ENCODE measurements at regions of chr1 and their contacts with region 1.

Region 1: DNA sequence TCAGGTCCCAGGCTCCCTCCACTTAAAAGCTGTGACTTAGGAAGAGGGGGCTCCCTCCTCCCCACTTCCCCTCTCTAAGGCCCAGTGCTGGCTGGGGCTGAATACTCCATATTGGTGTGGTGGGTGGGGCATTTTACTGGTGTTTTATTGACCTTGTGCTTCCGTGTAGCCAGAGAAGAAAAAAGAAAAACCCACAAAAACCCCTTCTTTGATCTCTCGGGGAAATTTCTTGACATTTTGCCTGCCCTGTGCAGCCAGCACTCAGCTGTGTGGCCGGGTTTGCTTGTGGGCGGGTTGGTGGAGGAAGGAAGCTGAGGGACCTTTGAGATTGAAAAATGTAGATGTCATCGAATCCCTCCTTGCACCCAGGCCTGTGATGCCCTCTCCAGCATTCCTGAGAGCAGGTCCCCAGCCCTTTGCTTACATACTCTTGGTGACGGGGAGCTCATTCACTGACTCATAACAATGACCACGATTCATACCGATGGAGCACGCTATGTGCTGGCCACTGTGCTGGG is 24.8 kb downstream of the TNFRSF8 start:
- DNase-seq: peak; percentile 66
- H3K4me3 Mint-ChIP-seq: peak overlapping the region; percentile 51
- H3K27ac Mint-ChIP-seq: peak overlapping the region; percentile 95
- H3K4me1 Mint-ChIP-seq: peaks cover 58% of the 10 kb centered on the region
- H3K27me3 Mint-ChIP-seq: no peaks in the 10 kb centered on the region

Region 2: DNA sequence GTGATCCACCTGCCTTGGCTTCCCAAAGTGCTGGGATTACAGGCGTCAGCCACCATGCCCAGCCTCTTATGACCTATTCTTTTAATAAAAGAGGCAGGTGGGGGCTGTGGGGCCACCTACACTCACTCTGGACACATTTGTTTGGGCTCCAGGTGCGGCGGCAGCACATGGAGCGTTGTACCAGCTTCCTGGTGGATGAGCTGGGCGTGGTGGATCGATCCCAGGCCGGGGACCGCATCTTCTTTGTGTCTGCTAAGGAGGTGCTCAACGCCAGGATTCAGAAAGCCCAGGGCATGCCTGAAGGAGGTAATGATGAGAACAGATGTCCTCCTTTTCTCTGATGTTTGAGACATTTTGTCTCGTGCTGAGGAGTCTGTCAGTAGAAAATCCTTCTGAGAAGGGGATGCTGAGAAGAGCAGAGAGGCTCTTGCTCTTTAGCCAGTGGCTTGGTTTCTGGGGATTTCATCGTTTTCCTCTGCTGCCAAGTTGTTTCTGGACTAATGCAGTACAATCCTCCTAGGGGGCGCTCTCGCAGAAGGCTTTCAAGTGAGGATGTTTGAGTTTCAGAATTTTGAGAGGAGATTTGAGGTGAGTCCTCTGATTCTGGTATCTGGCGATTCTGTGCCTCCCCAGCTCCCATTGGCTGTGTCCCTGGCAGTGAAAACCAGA is 86.5 kb before region 1 on chr1:
- intact Hi-C with region 1: loop called (anchors 5 kb)
- DNase-seq: peak; percentile 34
- H3K4me3 Mint-ChIP-seq: no peak overlapping the region
- H3K27ac Mint-ChIP-seq: peak overlapping the region; percentile 18
- H3K4me1 Mint-ChIP-seq: peaks cover 23% of the 10 kb centered on the region
- H3K27me3 Mint-ChIP-seq: no peaks in the 10 kb centered on the region

Measured in activated T-helper 1 cell treated with anti-CD3 and anti-CD28 coated beads, Interleukin-12 subunit alpha, Interleukin-12 subunit beta, Interleukin-2, Interleukin-4 antibody, amounts not matched to agents 30 ng/mL and 10 ng/mL and 1 ng/mL, durations not matched to agents 14 hours and 24 hours and 36 hours (primary cell).